HAP-1 (cell line): ENCODE measurements at regions of chr5 and their contacts with region 1.

Region 1: DNA sequence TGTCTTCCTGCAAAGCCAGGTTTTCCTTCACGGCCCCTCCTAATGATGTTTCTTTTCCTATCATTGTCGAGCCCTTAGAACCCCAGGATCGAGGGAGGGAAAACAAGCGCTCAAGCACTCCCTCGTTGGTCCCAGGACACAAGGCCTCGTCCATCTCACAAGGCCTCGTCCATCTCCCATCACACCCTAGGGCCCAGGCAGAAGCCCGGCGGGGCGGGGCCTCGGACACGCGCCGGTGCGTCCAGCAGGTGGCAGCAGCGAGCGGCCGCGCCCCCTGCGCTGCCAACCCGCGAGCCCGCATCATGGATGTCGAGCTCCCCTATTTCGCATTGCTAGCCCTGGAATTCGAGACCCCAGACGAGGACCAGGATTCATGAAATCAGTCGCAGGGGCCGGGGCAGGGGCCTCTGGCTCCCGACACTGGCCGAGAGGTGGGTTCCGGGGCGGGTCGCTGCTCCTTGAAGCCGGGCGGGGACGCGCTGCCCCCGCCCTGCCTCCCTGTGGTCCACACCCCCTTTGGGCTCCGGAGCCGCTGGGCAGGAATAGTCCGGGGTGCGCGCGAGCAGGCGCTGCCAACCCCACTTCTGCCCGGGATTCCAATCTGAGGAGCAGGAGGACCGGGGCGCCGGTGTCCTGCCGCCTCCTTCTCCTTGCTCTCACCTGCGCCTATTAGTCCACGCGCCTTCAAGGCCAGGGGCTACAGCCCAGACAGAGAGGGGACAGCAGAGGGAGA is at the start of gene ABLIM3:
- DNase-seq: peak; percentile 34 to 74
- H3K4me3 ChIP-seq: peak within 1 kb of the TSS; percentile 48
- H3K4me1 ChIP-seq: no peaks in the 10 kb centered on the region
- H3K27me3 ChIP-seq: peaks cover 6% of the 10 kb centered on the region

Region 2: DNA sequence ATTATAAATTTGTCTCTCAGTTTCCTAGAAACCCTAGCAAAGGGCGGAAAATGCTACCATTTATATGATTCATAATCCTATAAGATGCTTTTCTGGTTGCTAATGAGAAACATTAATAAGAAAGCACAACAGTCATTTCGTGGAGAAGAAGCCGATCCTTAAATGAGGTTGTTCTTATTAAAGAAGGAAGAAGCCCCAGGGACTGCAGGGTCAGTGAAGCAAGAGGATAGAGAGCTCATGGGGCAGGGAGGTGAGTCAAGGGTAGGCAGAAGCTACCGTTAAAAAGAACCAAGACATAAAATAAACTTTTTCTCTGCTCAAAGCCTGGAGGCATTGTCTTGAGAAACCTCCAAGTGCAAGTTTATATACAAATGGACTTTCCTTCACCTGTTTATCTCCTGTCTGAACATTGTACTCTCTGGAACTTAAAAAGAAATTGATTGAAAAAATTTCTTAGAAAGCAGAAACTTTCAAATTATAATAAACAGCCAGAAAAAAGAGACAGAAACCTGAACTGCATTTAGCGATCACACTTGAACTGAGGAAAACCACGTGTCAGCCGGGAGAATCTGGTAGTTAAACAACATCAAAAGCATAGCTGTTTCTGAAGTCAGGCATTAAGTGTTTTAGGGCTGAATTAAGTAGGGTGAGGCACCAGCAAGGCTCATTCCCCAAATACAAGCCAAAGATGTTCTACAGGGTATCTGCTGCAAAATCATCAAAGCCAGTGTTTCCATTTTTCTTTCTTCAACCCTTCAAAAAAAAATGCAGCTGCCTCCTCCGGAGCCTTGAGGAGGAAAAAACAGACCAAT is 508.9 kb before region 1 on chr5:
- in situ Hi-C with region 1: no loop called
- DNase-seq: no peak
- H3K4me3 ChIP-seq: no peak overlapping the region
- H3K4me1 ChIP-seq: no peaks in the 10 kb centered on the region
- H3K27me3 ChIP-seq: no peaks in the 10 kb centered on the region

Region 3: GRCh38 chr5:149551200-149552037 is 410.0 kb after region 1 on chr5 and contains the start of gene CSNK1A1:
- in situ Hi-C with region 1: loop called (anchors 25 kb)
- DNase-seq: peak; percentile 97 to 99
- H3K4me3 ChIP-seq: peak within 1 kb of the TSS; percentile 89
- H3K4me1 ChIP-seq: peaks cover 26% of the 10 kb centered on the region
- H3K27me3 ChIP-seq: no peaks in the 10 kb centered on the region